Common myeloid progenitor, CD34-positive (primary cell): ENCODE measurements at regions of chr17 and their contacts with region 1.

Region 1: GRCh38 chr17:58577642-58578091 is 63.2 kb upstream of the MTMR4 start:
- DNase-seq: peak; percentile 48 to 74 (median 69)
- H3K4me3 ChIP-seq: no peak overlapping the region
- H3K27ac ChIP-seq: no peak overlapping the region
- H3K4me1 ChIP-seq: peaks cover 0 to 2% (median 1%) of the 10 kb centered on the region in 4 experiments
- H3K27me3 ChIP-seq: no peaks in the 10 kb centered on the region

Region 2: GRCh38 chr17:58541249-58541648 is 36.4 kb before region 1 on chr17:
- CTCF ChIA-PET with region 1: interaction called, 24 read pairs
- POLR2A ChIA-PET with region 1: no interaction called
- DNase-seq: peak; percentile 42 to 60 (median 55)
- H3K4me3 ChIP-seq: no peak overlapping the region
- H3K27ac ChIP-seq: no peak overlapping the region
- H3K4me1 ChIP-seq: peaks cover 0 to 8% (median 3%) of the 10 kb centered on the region in 4 experiments
- H3K27me3 ChIP-seq: peaks cover 0 to 2% (median 0%) of the 10 kb centered on the region in 5 experiments

Region 3: DNA sequence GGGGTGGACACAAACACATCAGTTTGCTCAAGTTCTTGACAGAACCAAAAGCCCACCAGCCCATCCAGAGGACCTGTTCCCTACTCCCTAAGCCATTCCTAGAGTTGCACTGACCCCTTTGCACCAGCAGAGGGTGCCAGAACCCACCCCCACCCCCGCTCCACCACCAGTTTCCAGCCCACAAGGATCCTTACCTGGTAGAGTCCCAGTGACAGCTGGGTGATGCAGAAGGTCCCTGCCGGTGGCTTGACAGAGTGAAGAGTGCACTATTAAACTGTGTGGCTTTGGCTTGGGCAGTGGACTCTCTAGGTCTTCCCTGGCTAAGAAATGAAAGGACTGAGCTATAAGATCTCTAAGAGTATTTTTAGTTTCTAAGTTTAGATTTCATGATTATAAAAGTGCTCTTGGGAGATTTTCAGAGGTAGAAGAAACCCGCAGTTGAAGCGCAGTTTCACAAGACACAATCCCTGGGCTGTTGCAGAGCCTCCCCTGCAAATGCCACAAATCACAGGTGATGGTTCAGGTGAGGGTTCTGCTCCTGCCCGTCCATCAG is 10.1 kb after region 1 on chr17:
- CTCF ChIA-PET with region 1: interaction called, 14 read pairs
- POLR2A ChIA-PET with region 1: no interaction called
- DNase-seq: peak; percentile 52 to 67 (median 63)
- H3K4me3 ChIP-seq: no peak overlapping the region
- H3K27ac ChIP-seq: no peak overlapping the region
- H3K4me1 ChIP-seq: no peaks in the 10 kb centered on the region
- H3K27me3 ChIP-seq: no peaks in the 10 kb centered on the region

Region 4: DNA sequence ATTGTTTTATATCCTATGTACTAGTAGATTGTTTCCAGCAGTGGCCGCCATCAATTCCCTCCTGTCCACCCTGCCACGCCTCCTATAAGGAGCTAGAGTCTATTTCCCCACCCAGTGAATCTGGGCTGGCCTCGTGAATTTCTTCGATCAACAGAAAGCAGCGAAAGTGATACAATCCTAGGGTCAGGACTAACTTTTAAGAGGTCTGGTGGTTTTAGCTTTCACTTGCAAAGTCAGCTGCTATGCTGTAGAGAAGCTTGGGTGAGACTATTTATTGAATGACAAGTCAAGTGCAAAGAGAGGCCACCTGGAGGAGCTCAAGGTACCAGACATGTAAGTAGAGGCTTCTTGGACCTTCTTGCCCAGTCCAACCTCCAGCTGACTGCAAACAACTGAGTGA is 17.7 kb after region 1 on chr17:
- CTCF ChIA-PET with region 1: interaction called, 10 read pairs
- POLR2A ChIA-PET with region 1: interaction called, 4 read pairs
- DNase-seq: no peak
- H3K4me3 ChIP-seq: no peak overlapping the region
- H3K27ac ChIP-seq: no peak overlapping the region
- H3K4me1 ChIP-seq: no peaks in the 10 kb centered on the region
- H3K27me3 ChIP-seq: no peaks in the 10 kb centered on the region

Region 5: DNA sequence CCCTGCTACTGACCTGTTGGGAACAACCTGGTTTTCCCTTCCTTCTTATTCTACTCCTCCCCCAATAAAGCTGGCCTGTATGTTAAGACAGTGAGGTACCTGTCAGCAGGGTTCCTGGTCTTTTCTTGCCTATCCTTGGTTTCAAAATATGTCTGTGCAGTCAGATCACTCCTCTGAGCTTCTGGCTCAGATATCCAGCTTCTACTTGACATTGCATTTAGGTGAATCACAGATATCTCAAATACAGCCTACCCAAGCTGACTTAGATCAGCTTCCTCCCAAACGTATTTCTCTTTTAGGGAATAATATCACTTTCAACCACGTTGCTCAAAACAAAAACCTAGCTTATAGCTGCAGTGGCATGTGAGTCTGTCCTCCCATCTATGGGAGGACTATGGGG is 65.5 kb after region 1 on chr17:
- CTCF ChIA-PET with region 1: no interaction called
- POLR2A ChIA-PET with region 1: no interaction called
- DNase-seq: no peak
- H3K4me3 ChIP-seq: no peak overlapping the region
- H3K27ac ChIP-seq: no peak overlapping the region
- H3K4me1 ChIP-seq: no peaks in the 10 kb centered on the region
- H3K27me3 ChIP-seq: no peaks in the 10 kb centered on the region